ENCODE measurements at regions of chr1 and their contacts with region 1.

Region 1: GRCh38 chr1:8718850-8719361 is 98.5 kb downstream of the RERE start:
- DNase-seq: no peak
- H3K4me3 ChIP-seq: no peak overlapping the region
- H3K27ac ChIP-seq: peak overlapping the region; percentile 22 to 44 (median 32)
- H3K4me1 ChIP-seq: peaks cover 4 to 86% (median 51%) of the 10 kb centered on the region in 4 donors
- H3K27me3 ChIP-seq: no peaks in the 10 kb centered on the region
- CTCF ChIP-seq: peak; percentile 28 to 53 (median 46)
- EP300 ChIP-seq: no peak
- POLR2A ChIP-seq: no peak

Region 2: GRCh38 chr1:8671306-8671917 is 47.5 kb before region 1 on chr1:
- intact Hi-C with region 1: loop called (anchors 5 kb)
- DNase-seq: no peak
- H3K4me3 ChIP-seq: no peak overlapping the region
- H3K27ac ChIP-seq: no peak overlapping the region
- H3K4me1 ChIP-seq: peaks cover 43 to 77% (median 69%) of the 10 kb centered on the region in 4 donors
- H3K27me3 ChIP-seq: no peaks in the 10 kb centered on the region
- CTCF ChIP-seq: peak; percentile 82 to 91 (median 83)
- EP300 ChIP-seq: no peak
- POLR2A ChIP-seq: no peak

Region 3: GRCh38 chr1:8848663-8849386 is 129.9 kb after region 1 on chr1:
- intact Hi-C with region 1: loop called (anchors 2 kb)
- DNase-seq: peak; percentile 94
- H3K4me3 ChIP-seq: peak overlapping the region in 2 of 4 donors; percentile 15 to 18
- H3K27ac ChIP-seq: peak overlapping the region; percentile 14 to 76 (median 63)
- H3K4me1 ChIP-seq: peaks cover 13 to 39% (median 26%) of the 10 kb centered on the region in 4 donors
- H3K27me3 ChIP-seq: no peaks in the 10 kb centered on the region
- CTCF ChIP-seq: peak; percentile 87 to 98 (median 97)
- EP300 ChIP-seq: no peak
- POLR2A ChIP-seq: no peak

Region 4: GRCh38 chr1:8941906-8942305 is 223.0 kb after region 1 on chr1:
- intact Hi-C with region 1: no loop called
- DNase-seq: no peak
- H3K4me3 ChIP-seq: no peak overlapping the region
- H3K27ac ChIP-seq: peak overlapping the region in 2 of 4 donors; percentile 27 to 47
- H3K4me1 ChIP-seq: no peaks in the 10 kb centered on the region
- H3K27me3 ChIP-seq: no peaks in the 10 kb centered on the region
- CTCF ChIP-seq: no peak
- EP300 ChIP-seq: no peak
- POLR2A ChIP-seq: no peak